ENCODE measurements at regions of chr1 and their contacts with region 1.

Region 1: DNA sequence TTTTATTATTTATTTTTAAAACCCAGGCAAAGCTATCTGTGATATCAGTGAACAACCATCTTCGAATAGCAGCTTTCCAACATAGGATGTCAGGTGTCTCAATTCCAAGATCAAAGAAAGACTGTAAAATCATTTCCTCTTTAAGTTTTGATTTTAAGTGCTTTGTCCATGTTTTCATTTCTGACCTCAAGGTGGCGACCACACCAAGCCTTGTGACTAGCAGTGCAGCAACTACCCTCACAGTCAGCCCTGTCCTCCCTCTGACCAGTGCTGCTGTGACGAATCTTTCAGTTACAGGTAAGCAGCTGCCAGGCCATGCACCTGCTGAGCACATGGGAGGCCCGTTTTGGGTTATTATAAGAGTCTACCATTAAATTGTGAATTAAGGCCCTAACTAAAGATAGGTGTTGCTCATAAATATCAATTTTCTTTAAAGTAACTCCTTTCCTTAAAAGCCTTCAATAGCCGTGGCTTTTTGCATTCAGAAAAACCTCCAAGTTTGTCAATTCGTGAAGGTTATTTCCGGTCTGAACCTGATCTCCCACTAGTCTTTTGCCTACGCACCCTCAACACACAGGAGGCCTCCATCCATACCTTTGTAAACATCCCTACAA is 117.0 kb downstream of the CD247 start:
- DNase-seq: peak; percentile 26
- ATAC-seq: peak; percentile 68
- H3K4me3 Mint-ChIP-seq: no peak overlapping the region
- H3K27ac Mint-ChIP-seq: no peak overlapping the region
- H3K4me1 Mint-ChIP-seq: no peaks in the 10 kb centered on the region
- H3K27me3 Mint-ChIP-seq: no peaks in the 10 kb centered on the region
- CTCF ChIP-seq: peak; percentile 12

Region 2: GRCh38 chr1:167270349-167271092 is 130.8 kb before region 1 on chr1:
- CTCF ChIA-PET with region 1: interaction called, 13 read pairs
- POLR2A ChIA-PET with region 1: interaction called, 11 read pairs
- intact Hi-C with region 1: loop called (anchors 1 kb)
- DNase-seq: no peak
- ATAC-seq: no peak
- H3K4me3 Mint-ChIP-seq: no peak overlapping the region
- H3K27ac Mint-ChIP-seq: no peak overlapping the region
- H3K4me1 Mint-ChIP-seq: peaks cover 42% of the 10 kb centered on the region
- H3K27me3 Mint-ChIP-seq: no peaks in the 10 kb centered on the region
- CTCF ChIP-seq: no peak

Region 3: GRCh38 chr1:167442124-167442848 is 40.9 kb after region 1 on chr1:
- CTCF ChIA-PET with region 1: interaction called, 42 read pairs
- POLR2A ChIA-PET with region 1: no interaction called
- intact Hi-C with region 1: loop called (anchors 1 kb)
- DNase-seq: peak; percentile 75
- ATAC-seq: peak; percentile 92
- H3K4me3 Mint-ChIP-seq: no peak overlapping the region
- H3K27ac Mint-ChIP-seq: no peak overlapping the region
- H3K4me1 Mint-ChIP-seq: peaks cover 35% of the 10 kb centered on the region
- H3K27me3 Mint-ChIP-seq: no peaks in the 10 kb centered on the region
- CTCF ChIP-seq: no peak

Region 4: DNA sequence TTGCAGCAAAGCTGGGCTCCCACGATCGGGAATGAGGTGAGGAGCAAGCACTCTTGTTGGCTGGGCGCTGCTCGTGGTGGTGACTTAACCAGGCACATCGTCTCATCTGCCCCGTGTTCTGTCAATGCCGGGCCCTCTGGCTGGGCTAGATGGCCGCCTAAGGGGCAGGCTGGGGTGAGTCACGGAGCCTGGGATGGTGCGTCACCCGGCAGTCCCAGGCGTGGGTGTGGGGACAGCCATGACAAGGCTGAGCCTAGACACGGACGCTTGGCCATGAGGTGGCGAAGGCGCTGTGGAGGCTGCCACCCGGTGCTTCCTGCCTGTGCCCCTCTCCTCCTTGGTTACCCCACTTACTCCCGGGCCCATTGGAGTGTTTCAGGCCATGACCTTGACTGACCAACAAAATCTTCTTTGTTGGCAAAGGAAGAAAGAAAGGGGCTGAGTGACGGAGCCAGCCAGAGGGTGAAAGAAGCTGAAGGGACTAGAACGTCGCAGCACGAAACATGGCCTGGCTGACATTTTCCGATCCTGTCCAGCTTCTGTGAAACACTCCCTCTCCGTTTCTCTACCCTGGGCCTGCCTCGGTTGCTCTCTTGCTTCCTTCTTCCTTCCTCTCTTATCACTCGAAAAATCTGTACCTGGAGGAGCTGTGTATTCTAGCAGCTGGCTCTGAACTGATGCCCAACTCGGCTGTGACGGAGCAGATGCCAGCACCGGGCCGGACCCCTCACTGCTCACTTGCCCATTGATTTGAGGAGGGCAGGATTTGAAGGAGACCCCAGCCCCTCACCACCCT is 116.4 kb after region 1 on chr1:
- CTCF ChIA-PET with region 1: no interaction called
- POLR2A ChIA-PET with region 1: no interaction called
- intact Hi-C with region 1: no loop called
- DNase-seq: no peak
- ATAC-seq: no peak
- H3K4me3 Mint-ChIP-seq: no peak overlapping the region
- H3K27ac Mint-ChIP-seq: no peak overlapping the region
- H3K4me1 Mint-ChIP-seq: no peaks in the 10 kb centered on the region
- H3K27me3 Mint-ChIP-seq: peaks cover 19% of the 10 kb centered on the region
- CTCF ChIP-seq: no peak

Region 5: DNA sequence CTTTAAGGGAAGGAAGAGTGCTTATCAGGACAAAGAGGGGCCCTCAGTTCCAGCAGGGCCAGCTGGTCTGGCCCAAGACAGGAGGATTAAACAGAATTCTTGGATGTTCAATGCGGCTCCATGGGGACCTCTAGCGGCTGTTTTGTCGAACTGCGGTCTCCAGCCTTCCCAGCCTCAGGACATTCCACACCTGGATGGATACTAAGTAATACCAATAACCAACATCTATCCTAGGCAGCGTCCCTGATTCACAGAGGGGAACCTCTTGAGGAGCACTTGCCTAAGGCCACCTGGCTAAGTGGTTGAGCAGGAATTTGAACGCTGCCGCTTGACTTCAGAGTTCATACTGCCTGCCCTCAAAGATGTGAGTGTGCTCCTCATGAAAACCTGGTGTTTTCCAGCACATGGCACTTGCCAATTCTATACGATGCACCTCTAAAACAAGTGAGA is 132.5 kb after region 1 on chr1:
- CTCF ChIA-PET with region 1: interaction called, 54 read pairs
- POLR2A ChIA-PET with region 1: no interaction called
- intact Hi-C with region 1: loop called (anchors 1 kb)
- DNase-seq: peak; percentile 36
- ATAC-seq: peak; percentile 78
- H3K4me3 Mint-ChIP-seq: no peak overlapping the region
- H3K27ac Mint-ChIP-seq: no peak overlapping the region
- H3K4me1 Mint-ChIP-seq: peaks cover 4% of the 10 kb centered on the region
- H3K27me3 Mint-ChIP-seq: no peaks in the 10 kb centered on the region
- CTCF ChIP-seq: no peak

Region 6: GRCh38 chr1:167803358-167804207 is 402.2 kb after region 1 on chr1:
- CTCF ChIA-PET with region 1: no interaction called
- POLR2A ChIA-PET with region 1: no interaction called
- intact Hi-C with region 1: loop called (anchors 10 kb)
- DNase-seq: peak; percentile 79
- ATAC-seq: peak; percentile 100
- H3K4me3 Mint-ChIP-seq: peak overlapping the region; percentile 48
- H3K27ac Mint-ChIP-seq: no peak overlapping the region
- H3K4me1 Mint-ChIP-seq: peaks cover 22% of the 10 kb centered on the region
- H3K27me3 Mint-ChIP-seq: no peaks in the 10 kb centered on the region
- CTCF ChIP-seq: peak; percentile 54